Mucosa of descending colon (tissue), 3 donors: ENCODE measurements at regions of chr17 and their contacts with region 1.

Region 1: GRCh38 chr17:51153210-51154072 is at the start of gene NME1:
- DNase-seq: peak; percentile 97 to 98 (median 98)
- ATAC-seq: peak; percentile 98
- H3K4me3 ChIP-seq: peak within 1 kb of the TSS; percentile 12
- H3K4me1 ChIP-seq: peaks cover 15% of the 10 kb centered on the region
- CTCF ChIP-seq: peak; percentile 62
- total RNA-seq, gene NME1: 18.8 to 64.2 (median 23.9) TPM

Region 2: GRCh38 chr17:51000835-51001638 is 152.4 kb before region 1 on chr17:
- intact Hi-C with region 1: loop called (anchors 2 to 10 kb)
- DNase-seq: peak in 1 of 3 donors; percentile 63
- ATAC-seq: peak; percentile 69
- H3K4me3 ChIP-seq: no peak overlapping the region
- H3K4me1 ChIP-seq: no peaks in the 10 kb centered on the region
- CTCF ChIP-seq: no peak

Region 3: GRCh38 chr17:51085185-51085805 is 68.1 kb before region 1 on chr17:
- intact Hi-C with region 1: no loop called
- DNase-seq: no peak
- ATAC-seq: no peak
- H3K4me3 ChIP-seq: no peak overlapping the region
- H3K4me1 ChIP-seq: no peaks in the 10 kb centered on the region
- CTCF ChIP-seq: no peak

Region 4: GRCh38 chr17:51200295-51200694 is 46.9 kb after region 1 on chr17:
- intact Hi-C with region 1: no loop called
- DNase-seq: no peak
- ATAC-seq: no peak
- H3K4me3 ChIP-seq: no peak overlapping the region
- H3K4me1 ChIP-seq: no peaks in the 10 kb centered on the region
- CTCF ChIP-seq: no peak

Region 5: DNA sequence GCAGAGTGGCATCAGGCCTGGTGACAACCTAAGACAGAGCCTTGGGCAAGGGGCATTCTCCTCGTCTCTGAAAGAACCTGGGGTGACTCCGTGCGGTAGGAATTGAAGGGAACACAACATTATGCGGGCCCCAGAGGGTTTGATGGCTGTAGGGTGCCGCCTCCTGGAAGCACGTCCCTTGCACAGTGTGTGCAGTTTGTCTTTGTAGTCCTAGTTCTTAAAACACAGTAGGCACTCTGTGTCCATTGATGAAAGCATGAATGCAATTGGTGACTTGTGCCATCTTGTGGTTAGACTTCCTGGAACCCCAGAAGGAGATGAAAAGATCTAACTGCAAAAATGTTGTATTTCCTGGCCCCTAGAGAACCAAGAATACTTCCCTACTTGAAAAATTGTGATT is 386.7 kb after region 1 on chr17:
- intact Hi-C with region 1: no loop called
- DNase-seq: no peak
- ATAC-seq: no peak
- H3K4me3 ChIP-seq: no peak overlapping the region
- H3K4me1 ChIP-seq: no peaks in the 10 kb centered on the region
- CTCF ChIP-seq: no peak